Head of caudate nucleus (tissue), 42 donors: ENCODE measurements at regions of chr4 and their contacts with region 1.

Region 1: GRCh38 chr4:1351854-1352633 is 5.0 kb downstream of the UVSSA start:
- DNase-seq: peak; percentile 61 to 92 (median 84)

Region 2: DNA sequence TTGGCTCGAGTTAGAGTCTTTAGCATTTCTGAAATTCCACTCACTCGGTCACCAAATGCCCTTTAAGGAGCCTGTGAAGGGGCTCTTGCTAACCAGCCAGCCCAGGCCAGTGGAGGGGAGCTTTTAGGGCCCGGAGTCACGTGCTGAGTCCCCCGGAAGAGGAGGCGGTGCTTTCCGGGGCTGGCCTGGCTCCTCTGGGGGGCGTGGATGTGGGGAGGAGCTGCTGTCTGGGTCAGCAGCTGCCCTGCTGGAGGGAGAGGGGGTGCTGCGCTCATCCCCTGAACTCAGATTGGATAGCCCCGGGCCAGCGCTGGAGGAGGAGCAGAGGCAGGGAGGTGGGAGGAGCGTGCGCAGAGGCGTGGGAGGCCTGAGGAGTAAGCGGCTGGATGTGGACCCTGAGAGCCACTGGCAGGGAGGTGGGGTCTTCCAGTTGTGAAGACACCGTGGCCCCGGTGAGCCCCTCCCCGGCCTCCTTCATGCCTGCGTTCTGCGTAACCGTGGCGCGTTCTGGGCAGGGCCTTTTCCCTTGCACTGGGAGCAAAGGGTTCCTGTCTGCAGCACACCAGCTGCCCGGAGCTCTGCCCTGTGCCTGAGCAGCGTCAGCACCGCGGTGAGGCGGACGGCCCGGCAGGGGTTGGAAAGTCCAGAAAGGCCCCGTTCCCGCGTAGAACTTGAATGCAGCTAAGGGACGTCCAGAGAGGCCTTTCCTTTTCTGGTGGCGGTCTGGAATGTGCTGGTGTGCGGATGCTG is 42.6 kb before region 1 on chr4:
- intact Hi-C with region 1: no loop called
- DNase-seq: peak; percentile 75 to 95 (median 88)

Region 3: DNA sequence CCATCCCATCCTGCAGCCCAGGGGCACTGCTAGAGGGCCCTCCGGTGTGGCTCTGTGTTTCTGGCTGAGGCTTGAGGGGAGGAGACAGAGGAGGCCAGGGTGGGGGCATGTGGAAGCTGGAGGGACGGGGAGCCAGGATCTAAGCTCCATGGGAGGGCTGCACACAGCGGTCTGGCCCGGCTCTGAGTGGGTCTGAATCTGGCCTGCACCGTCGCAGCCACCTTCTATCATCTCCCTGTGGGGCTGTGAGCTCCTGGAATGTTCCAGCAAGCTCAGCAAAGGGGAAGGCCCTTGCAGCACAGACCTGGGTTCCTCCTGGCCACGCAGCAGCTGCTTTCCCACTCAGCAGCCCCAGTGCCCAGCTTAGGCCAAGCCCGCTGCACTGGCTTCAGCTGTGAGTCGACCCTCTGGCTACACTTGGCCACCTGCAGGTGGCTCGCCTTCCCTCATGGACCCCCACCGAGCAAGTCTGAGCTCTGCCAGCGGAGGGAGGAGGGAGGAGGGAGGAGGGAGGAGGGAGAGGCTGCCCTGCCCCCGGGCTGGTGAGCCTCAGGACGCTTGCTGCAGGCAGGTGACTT is 48.9 kb after region 1 on chr4:
- intact Hi-C with region 1: no loop called
- DNase-seq: peak in 9 of 42 donors; percentile 0 to 20 (median 5)

Region 4: DNA sequence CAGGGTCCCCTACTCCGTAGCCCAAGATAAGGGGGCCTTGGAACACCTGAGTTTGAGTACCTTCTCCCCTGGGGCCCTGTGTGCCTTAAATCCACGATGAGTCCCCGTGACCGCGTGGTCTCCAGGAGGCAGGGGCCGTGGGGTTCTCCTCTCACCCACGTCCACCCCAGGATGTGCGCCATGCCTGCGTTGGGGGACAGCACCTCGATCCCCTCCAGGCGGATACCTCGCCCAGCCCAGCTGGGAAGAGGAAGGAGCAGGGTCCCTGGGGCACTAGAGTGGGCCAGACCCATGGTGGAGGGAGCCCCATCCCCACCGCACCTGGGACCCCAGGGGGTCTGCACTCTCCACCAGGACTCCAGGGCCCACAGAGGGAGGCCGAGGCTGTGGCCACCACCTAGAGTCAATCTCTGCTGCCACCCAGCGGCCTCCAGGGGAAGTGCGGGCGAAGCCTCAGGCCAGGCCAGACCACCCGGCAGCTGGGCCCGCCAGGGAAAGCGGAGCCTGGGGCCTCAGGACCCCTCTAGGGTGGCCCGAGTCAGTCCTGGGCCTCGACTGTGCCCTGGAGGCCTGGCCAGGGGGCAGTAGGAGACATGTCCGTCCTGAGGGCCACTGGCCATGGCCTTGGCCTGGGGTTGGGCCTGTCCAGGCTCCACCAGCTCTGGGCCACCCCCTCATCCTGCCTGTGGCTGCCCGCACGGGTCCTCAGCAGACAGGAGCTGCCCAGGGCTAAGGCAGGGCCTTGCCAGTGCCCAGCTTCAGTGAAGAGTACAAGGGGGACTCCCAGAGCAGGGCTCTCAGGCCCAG is 277.1 kb after region 1 on chr4:
- intact Hi-C with region 1: loop called (anchors 5 kb)
- DNase-seq: peak; percentile 23 to 89 (median 72)

Region 5: DNA sequence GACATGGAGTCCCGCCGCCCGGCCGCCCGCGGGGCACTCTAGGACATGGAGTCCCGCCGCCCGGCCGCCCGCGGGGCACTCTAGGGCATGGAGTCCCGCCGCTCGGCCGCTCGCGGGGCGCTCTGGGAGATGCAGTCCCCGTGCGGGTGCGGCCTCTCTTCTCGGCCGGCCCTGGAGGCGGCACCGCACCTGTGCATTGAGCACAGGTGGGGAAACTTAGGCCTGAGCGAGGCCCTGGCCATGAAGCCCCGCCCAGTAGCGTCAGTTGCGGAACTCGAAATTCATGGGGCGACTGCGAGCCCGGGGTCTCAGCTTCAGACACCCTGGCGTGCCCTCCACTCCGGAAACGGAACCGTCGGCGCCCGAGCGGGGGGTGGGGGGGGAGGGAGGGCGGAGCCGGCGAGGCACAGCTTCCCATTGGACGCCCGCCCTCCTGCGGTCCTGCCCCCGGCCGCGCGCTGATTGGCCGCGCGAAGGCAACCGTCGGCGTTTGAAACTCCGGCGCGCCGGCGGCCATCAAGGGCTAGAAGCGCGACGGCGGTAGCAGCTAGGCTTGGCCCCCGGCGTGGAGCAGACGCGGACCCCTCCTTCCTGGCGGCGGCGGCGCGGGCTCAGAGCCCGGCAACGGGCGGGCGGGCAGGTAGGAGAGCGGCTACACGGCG is 369.1 kb after region 1 on chr4 and contains the starts of genes TACC3 and TMEM129:
- intact Hi-C with region 1: loop called (anchors 10 kb)
- DNase-seq: peak; percentile 87 to 98 (median 95)